AG04450 (cell line): ENCODE measurements at regions of chr4 and their contacts with region 1.

Region 1: DNA sequence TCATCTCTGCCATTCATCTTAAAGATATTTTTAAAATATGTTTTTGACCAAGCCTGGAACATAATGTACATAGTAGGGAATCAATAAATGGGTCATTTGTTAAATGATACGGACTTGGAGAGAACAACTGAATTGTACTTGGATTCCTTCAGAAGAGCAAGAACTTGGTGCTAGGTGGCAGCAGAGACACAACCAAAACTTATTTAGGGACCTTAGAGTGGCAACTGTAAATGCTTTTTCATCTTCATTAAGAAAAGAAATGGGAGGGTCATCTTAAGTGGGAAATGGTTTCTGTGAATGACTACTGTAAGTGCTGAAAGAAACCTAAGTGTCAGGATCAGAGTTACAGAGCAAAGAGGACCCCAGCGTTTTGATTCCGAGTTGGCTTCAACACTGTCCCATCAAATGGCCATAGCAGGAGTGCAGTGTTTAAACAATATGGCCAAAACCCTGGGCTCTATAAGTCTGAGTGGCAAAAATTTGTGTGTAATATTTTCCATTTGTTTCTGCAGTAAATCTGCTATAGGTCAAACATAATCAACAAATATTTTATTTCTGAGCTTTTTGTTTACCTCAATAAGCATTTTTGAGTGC is 213.6 kb downstream of the PALLD start:
- DNase-seq: peak; percentile 39
- H3K4me3 ChIP-seq: no peak overlapping the region
- H3K27ac ChIP-seq: no peak overlapping the region
- H3K27me3 ChIP-seq: no peaks in the 10 kb centered on the region
- CTCF ChIP-seq: peak; percentile 66

Region 2: DNA sequence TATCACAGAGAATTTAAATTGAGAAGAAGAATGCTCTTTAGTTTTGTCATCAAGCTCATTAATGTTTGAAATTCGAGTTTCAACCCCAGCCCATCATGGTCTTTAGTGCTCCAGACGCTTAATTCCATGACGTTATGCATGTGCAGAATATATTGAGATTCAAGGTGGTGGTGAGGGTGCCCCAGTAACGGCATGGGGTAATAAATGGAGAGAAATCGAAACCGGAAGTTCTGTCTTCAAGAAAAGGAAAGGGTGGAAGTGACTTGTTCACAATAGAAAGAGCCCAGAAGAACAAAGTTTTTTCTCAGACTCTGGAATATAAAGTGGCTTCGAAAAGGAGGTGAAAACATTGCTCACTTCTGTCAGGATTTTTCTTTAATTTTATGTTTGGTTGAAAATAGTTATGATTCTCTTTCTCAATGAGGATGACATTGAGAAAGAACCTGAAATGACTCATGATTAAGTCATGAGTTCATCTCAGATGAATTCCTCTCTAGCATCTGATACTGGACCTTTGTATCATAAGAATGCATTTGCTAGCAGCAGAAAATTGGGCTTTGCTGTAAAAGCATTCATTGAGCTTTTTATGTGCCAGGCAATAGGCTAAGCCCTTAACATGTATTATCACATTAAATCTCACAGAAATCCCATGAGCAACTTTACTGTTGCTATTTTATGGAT is 229.4 kb before region 1 on chr4:
- CTCF ChIA-PET with region 1: no interaction called
- POLR2A ChIA-PET with region 1: no interaction called
- DNase-seq: peak; percentile 41
- H3K4me3 ChIP-seq: peak overlapping the region; percentile 71
- H3K27ac ChIP-seq: peak overlapping the region; percentile 94
- H3K27me3 ChIP-seq: no peaks in the 10 kb centered on the region
- CTCF ChIP-seq: no peak

Region 3: GRCh38 chr4:168664242-168664882 is 46.1 kb before region 1 on chr4:
- CTCF ChIA-PET with region 1: no interaction called
- POLR2A ChIA-PET with region 1: no interaction called
- DNase-seq: no peak
- H3K4me3 ChIP-seq: no peak overlapping the region
- H3K27ac ChIP-seq: no peak overlapping the region
- H3K27me3 ChIP-seq: no peaks in the 10 kb centered on the region
- CTCF ChIP-seq: no peak

Region 4: DNA sequence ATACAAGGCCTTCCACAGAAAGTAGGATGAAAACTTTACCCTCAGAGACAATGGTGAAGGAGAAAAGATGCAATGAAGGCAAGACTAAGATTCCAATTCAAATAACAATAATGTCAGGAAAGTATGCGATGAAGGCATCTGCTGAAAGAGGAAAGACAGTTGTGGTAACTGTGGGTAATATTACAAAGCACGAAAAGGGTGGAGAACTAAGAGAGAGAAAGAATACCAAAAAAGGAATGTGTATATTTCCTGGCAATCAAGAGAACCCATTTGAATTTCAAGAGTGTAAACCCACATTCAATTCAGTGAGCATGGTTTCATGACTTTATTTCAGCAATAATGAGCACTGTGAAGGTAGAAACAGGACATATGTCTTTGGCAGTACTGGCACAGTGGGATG is 11.9 kb after region 1 on chr4:
- CTCF ChIA-PET with region 1: interaction called, 14 read pairs
- POLR2A ChIA-PET with region 1: no interaction called
- DNase-seq: no peak
- H3K4me3 ChIP-seq: no peak overlapping the region
- H3K27ac ChIP-seq: no peak overlapping the region
- H3K27me3 ChIP-seq: no peaks in the 10 kb centered on the region
- CTCF ChIP-seq: no peak